ENCODE measurements at regions of chr15 and their contacts with region 1.

Region 1: DNA sequence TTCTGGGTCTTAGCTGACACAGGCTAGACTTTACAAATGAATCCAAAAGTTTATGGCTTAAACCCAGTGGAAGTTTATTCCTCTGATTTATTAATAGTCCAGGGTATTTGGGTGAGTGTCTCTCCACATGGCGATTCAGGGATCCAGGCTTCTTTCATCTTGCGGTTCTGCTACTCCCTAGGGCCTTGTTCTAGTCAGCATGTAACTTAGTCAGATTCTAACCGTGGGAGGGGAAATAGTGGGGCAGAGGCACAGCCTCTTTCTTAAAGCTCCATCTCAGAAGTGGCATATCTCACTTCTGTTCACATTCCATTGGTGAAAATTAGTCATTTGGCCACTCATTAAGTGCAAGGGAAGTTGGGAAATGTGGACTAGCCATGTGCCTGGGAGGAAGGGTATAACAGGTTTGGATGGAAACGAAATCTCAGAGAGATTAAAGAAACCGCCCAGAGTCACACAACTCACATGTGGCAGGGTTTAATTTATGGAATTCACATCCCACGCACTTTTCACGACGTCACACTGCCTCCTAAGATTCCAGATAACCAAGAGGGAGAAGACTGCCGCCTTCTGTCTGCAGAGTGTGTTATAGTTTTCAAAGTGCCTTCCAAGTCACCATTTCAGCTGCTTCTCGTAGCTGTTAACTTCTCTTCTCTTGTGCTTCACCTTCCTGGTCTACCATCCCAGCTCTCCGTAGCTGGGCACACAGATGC is 11.4 kb upstream of the RASGRF1 start:
- DNase-seq: no peak
- H3K4me3 ChIP-seq: no peak overlapping the region
- H3K27ac ChIP-seq: no peak overlapping the region
- H3K4me1 ChIP-seq: no peaks in the 10 kb centered on the region
- H3K27me3 ChIP-seq: peaks cover 0 to 62% of the 10 kb centered on the region in 2 donors
- CTCF ChIP-seq: no peak

Region 2: DNA sequence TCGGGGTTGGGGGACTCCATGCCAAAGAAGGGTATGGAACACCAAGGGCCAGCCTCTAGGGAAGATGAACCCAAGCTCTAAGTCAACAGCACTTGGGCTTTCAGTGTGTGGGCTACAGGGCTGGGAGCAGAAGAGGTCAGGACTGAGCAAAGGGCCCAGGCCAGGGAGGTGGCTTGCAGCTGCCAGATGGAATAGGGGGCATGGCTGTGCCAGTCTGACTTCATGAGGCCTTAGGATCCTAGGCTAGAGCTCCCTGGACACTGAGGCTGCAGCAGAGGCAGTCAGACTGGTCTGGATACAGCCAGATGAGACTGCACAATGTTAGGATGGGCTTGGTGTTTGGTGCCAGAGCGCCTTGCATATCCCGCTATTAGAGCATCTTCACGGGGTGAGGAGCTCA is 15.2 kb before region 1 on chr15:
- intact Hi-C with region 1: loop called (anchors 1 kb)
- DNase-seq: peak in 1 of 2 donors; percentile 21
- H3K4me3 ChIP-seq: no peak overlapping the region
- H3K27ac ChIP-seq: no peak overlapping the region
- H3K4me1 ChIP-seq: peaks cover 0 to 26% (median 22%) of the 10 kb centered on the region in 4 donors
- H3K27me3 ChIP-seq: peaks cover 0 to 70% of the 10 kb centered on the region in 2 donors
- CTCF ChIP-seq: no peak

Measured in tibial artery (tissue), 4 donors.